Mammary epithelial cell (primary cell): ENCODE measurements at regions of chr7 and their contacts with region 1.

Region 1: GRCh38 chr7:2844165-2844898 is at the start of gene GNA12:
- DNase-seq: peak; percentile 98
- H3K4me3 ChIP-seq: peak within 1 kb of the TSS; percentile 60 to 80 (median 65)
- H3K27ac ChIP-seq: peak within 1 kb of the TSS; percentile 30
- H3K4me1 ChIP-seq: peaks cover 13% of the 10 kb centered on the region
- H3K27me3 ChIP-seq: no peaks in the 10 kb centered on the region
- CTCF ChIP-seq: no peak
- total RNA-seq, gene GNA12: 26.2 to 46.0 TPM

Region 2: GRCh38 chr7:2641406-2642393 is 202.6 kb before region 1 on chr7:
- CTCF ChIA-PET with region 1: no interaction called
- dilution Hi-C with region 1: no loop called
- in situ Hi-C with region 1: no loop called
- intact Hi-C with region 1: no loop called
- DNase-seq: peak; percentile 76
- H3K4me3 ChIP-seq: no peak overlapping the region
- H3K27ac ChIP-seq: no peak overlapping the region
- H3K4me1 ChIP-seq: peaks cover 22% of the 10 kb centered on the region
- H3K27me3 ChIP-seq: no peaks in the 10 kb centered on the region
- CTCF ChIP-seq: no peak

Region 3: GRCh38 chr7:2821161-2821841 is 23.0 kb before region 1 on chr7:
- CTCF ChIA-PET with region 1: no interaction called
- dilution Hi-C with region 1: no loop called
- in situ Hi-C with region 1: no loop called
- intact Hi-C with region 1: loop called (anchors 1 kb)
- DNase-seq: peak; percentile 95
- H3K4me3 ChIP-seq: no peak overlapping the region
- H3K27ac ChIP-seq: peak overlapping the region; percentile 92
- H3K4me1 ChIP-seq: peaks cover 47% of the 10 kb centered on the region
- H3K27me3 ChIP-seq: no peaks in the 10 kb centered on the region
- CTCF ChIP-seq: peak; percentile 3 to 4

Region 4: GRCh38 chr7:2870471-2870931 is 26.2 kb after region 1 on chr7:
- CTCF ChIA-PET with region 1: no interaction called
- dilution Hi-C with region 1: no loop called
- in situ Hi-C with region 1: no loop called
- intact Hi-C with region 1: no loop called
- DNase-seq: peak; percentile 30
- H3K4me3 ChIP-seq: no peak overlapping the region
- H3K27ac ChIP-seq: no peak overlapping the region
- H3K4me1 ChIP-seq: peaks cover 13% of the 10 kb centered on the region
- H3K27me3 ChIP-seq: no peaks in the 10 kb centered on the region
- CTCF ChIP-seq: no peak

Region 5: GRCh38 chr7:2903682-2904162 is 59.4 kb after region 1 on chr7:
- CTCF ChIA-PET with region 1: no interaction called
- dilution Hi-C with region 1: no loop called
- in situ Hi-C with region 1: no loop called
- intact Hi-C with region 1: no loop called
- DNase-seq: no peak
- H3K4me3 ChIP-seq: no peak overlapping the region
- H3K27ac ChIP-seq: no peak overlapping the region
- H3K4me1 ChIP-seq: no peaks in the 10 kb centered on the region
- H3K27me3 ChIP-seq: no peaks in the 10 kb centered on the region
- CTCF ChIP-seq: no peak